PC-9 (cell line): ENCODE measurements at regions of chr10 and their contacts with region 1.

Region 1: GRCh38 chr10:18699849-18700840 is 40.9 kb downstream of the ARL5B start:
- DNase-seq: no peak
- H3K4me3 ChIP-seq: no peak overlapping the region
- H3K27ac ChIP-seq: no peak overlapping the region
- H3K4me1 ChIP-seq: no peaks in the 10 kb centered on the region
- H3K27me3 ChIP-seq: peaks cover 4% of the 10 kb centered on the region; the same call in 1 of the 2 replicates
- CTCF ChIP-seq: no peak

Region 2: GRCh38 chr10:19133992-19134391 is 433.8 kb after region 1 on chr10:
- CTCF ChIA-PET with region 1: interaction called, 20 read pairs
- POLR2A ChIA-PET with region 1: no interaction called
- intact Hi-C with region 1: no loop called
- DNase-seq: no peak
- H3K4me3 ChIP-seq: no peak overlapping the region
- H3K27ac ChIP-seq: no peak overlapping the region
- H3K4me1 ChIP-seq: no peaks in the 10 kb centered on the region
- H3K27me3 ChIP-seq: no peaks in the 10 kb centered on the region
- CTCF ChIP-seq: no peak